PC-9 (cell line): ENCODE measurements at regions of chr14 and their contacts with region 1.

Region 1: DNA sequence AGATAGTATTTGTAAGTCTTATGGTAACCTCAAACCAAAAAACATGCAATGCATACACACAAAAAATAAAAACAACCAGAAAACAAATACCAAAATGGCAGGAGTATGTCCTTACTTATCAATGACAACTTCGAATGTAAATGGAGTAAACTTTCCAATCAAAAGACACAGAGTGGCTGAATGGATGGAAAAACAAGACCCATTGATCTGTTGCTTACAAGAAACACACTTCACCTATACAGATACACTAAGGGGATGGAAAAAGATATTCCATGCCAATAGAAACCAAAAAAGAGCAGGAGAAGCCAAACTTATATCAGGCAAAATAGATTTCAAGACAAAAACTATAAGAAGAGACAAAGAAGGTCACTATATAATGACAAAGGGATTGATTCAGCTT is 8.7 kb upstream of the DCAF5 start:
- DNase-seq: no peak
- H3K4me3 ChIP-seq: no peak overlapping the region
- H3K27ac ChIP-seq: no peak overlapping the region
- H3K4me1 ChIP-seq: 0 out of 2 replicates have a peak, but pooled peaks cover 5% of the 10 kb centered on the region
- H3K27me3 ChIP-seq: no peaks in the 10 kb centered on the region
- CTCF ChIP-seq: no peak

Region 2: DNA sequence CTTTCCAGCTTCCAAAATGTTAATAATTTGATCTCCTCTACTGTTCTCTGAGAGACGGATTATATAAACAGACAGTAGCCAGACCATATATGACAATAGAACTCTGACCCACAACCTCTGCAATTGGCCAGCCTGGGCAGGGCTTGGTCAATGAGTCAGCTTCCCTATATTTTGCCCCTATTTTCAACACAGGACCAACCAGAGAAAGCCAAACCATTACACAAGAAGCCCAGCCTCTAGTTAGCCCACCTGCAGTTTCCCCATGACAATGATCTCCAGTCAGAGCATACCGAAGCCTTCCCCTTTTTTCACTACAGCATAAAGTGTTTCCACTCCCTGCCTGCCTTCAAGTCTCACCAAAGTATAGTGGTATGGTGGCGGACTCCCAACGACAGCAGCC is 22.1 kb after region 1 on chr14:
- CTCF ChIA-PET with region 1: no interaction called
- POLR2A ChIA-PET with region 1: no interaction called
- intact Hi-C with region 1: loop called (anchors 2 kb)
- DNase-seq: no peak
- H3K4me3 ChIP-seq: no peak overlapping the region
- H3K27ac ChIP-seq: no peak overlapping the region
- H3K4me1 ChIP-seq: no peaks in the 10 kb centered on the region
- H3K27me3 ChIP-seq: no peaks in the 10 kb centered on the region
- CTCF ChIP-seq: no peak